ENCODE measurements at regions of chr1 and their contacts with region 1.

Region 1: GRCh38 chr1:176225911-176226310 is 18.8 kb upstream of the COP1 start:
- DNase-seq: no peak
- ATAC-seq: no peak
- H3K4me3 ChIP-seq: no peak overlapping the region
- H3K27ac ChIP-seq: no peak overlapping the region
- H3K4me1 ChIP-seq: no peaks in the 10 kb centered on the region
- H3K27me3 ChIP-seq: no peaks in the 10 kb centered on the region
- CTCF ChIP-seq: no peak

Region 2: DNA sequence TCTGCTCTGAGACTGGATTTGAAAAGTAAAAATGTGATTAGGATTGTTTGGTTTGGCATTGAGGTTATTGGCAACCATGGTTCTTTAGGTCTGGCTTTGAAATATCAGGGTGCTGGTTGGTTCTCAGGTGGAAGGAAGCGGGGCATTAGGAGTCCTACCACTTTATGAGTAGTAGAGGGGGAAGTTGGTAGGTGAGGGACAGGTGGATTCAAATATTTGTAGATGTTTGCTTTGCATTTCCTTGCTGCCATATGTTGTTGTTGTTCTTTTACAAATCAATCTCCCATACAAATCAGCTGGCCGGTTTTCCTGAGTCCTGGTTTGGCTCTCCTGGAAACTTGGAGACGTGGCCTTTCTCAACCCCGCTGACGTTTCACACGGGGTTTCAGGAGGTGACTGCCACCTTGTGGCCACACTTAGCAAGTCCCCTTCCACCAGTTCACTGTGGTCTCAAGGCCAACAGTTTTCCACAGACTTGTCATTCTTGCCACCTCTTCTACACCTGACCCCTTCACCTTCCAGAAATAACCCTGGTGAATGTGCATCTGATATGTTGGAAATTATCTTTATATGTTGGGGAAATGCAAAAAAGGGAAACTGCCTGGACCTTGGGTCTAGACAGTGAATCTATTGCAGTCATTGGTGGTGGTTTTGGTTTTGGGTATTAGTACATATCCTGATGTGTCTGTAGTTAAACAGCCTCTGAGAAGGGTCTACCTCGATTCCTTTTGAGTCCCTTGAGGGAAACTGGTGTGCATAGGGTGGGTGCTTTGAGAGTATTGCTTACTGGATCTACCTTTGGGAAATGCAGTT is 906.3 kb before region 1 on chr1:
- CTCF ChIA-PET with region 1: no interaction called
- POLR2A ChIA-PET with region 1: interaction called, 31 read pairs
- intact Hi-C with region 1: no loop called
- DNase-seq: peak; percentile 79
- ATAC-seq: peak; percentile 88
- H3K4me3 ChIP-seq: no peak overlapping the region
- H3K27ac ChIP-seq: no peak overlapping the region
- H3K4me1 ChIP-seq: peaks cover 9% of the 10 kb centered on the region
- H3K27me3 ChIP-seq: no peaks in the 10 kb centered on the region
- CTCF ChIP-seq: peak; percentile 79

Region 3: GRCh38 chr1:176096015-176096414 is 129.9 kb before region 1 on chr1:
- CTCF ChIA-PET with region 1: no interaction called
- POLR2A ChIA-PET with region 1: no interaction called
- intact Hi-C with region 1: no loop called
- DNase-seq: no peak
- ATAC-seq: no peak
- H3K4me3 ChIP-seq: no peak overlapping the region
- H3K27ac ChIP-seq: no peak overlapping the region
- H3K4me1 ChIP-seq: no peaks in the 10 kb centered on the region
- H3K27me3 ChIP-seq: no peaks in the 10 kb centered on the region
- CTCF ChIP-seq: no peak